Activated B cell treated with CpG ODN at 0.5 μM for 24 hours (primary cell): ENCODE measurements at regions of chr13 and their contacts with region 1.

Region 1: GRCh38 chr13:21287331-21287907 is 111.0 kb downstream of the MRPL57 start:
- DNase-seq: no peak
- ATAC-seq: no peak
- H3K4me3 Mint-ChIP-seq: no peak overlapping the region
- H3K27ac Mint-ChIP-seq: no peak overlapping the region
- H3K4me1 Mint-ChIP-seq: no peaks in the 10 kb centered on the region
- H3K27me3 Mint-ChIP-seq: peaks cover 10% of the 10 kb centered on the region
- CTCF ChIP-seq: no peak

Region 2: DNA sequence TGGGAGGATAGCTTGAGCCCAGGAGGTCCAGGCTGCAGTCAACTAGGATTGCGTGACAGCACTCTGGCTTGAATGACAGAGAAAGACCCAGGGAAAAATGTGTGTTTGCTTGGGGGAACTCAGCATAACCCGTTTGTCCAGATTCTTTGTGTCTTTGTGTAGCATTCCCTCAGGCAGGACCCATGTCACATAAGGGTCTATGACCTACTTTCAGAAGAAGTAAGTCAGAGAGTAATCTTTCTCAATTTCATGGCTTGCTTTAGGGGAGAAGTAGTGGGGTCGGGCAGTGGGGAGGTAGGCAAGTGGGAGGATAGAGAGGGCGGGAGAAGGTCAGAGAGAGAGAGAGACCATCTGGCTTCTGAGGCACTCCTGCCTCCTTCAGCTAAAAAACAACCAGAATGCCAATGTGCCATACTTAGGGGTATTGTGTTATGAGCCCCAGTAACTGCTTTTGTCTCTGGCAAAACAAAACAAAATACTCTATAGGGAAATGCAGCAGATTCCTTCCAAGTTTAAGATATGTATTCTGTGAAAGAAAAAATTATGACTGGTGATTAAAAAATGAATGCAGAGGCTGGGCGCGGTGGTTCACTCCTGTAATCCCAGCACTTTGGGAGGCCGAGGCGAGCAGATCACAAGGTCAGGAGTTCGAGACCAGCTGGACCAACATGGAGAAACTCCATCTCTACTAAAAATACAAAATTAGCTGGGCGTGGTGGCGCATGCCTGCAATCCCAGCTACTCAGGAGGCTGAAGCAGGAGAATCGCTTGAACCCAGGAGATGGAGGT is 1492.6 kb before region 1 on chr13:
- CTCF ChIA-PET with region 1: no interaction called
- POLR2A ChIA-PET with region 1: no interaction called
- intact Hi-C with region 1: no loop called
- DNase-seq: no peak
- ATAC-seq: no peak
- H3K4me3 Mint-ChIP-seq: no peak overlapping the region
- H3K27ac Mint-ChIP-seq: no peak overlapping the region
- H3K4me1 Mint-ChIP-seq: peaks cover 4% of the 10 kb centered on the region
- H3K27me3 Mint-ChIP-seq: no peaks in the 10 kb centered on the region
- CTCF ChIP-seq: no peak

Region 3: DNA sequence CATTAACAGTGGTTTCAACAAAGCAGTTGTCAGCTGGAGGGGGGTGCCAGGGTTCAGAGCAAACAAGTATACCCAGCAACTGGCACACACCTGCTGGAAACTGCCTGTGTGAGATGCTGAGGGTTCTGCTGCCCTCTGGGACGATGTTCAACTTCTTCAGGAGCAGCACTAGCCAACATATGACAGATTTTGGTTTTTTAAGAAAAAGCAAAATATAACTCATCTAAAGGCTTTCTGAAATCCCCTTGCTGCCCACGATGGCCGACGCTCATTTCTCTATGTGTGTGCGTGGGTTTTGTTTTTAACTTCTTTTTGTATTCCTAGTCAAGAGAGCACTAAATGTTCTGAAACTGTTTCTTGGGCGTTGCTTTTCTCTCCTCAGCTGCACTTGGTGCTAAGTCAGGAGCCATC is 31.1 kb before region 1 on chr13:
- CTCF ChIA-PET with region 1: no interaction called
- POLR2A ChIA-PET with region 1: no interaction called
- intact Hi-C with region 1: loop called (anchors 5 kb)
- DNase-seq: no peak
- ATAC-seq: no peak
- H3K4me3 Mint-ChIP-seq: no peak overlapping the region
- H3K27ac Mint-ChIP-seq: no peak overlapping the region
- H3K4me1 Mint-ChIP-seq: no peaks in the 10 kb centered on the region
- H3K27me3 Mint-ChIP-seq: peaks cover 6% of the 10 kb centered on the region
- CTCF ChIP-seq: no peak

Region 4: DNA sequence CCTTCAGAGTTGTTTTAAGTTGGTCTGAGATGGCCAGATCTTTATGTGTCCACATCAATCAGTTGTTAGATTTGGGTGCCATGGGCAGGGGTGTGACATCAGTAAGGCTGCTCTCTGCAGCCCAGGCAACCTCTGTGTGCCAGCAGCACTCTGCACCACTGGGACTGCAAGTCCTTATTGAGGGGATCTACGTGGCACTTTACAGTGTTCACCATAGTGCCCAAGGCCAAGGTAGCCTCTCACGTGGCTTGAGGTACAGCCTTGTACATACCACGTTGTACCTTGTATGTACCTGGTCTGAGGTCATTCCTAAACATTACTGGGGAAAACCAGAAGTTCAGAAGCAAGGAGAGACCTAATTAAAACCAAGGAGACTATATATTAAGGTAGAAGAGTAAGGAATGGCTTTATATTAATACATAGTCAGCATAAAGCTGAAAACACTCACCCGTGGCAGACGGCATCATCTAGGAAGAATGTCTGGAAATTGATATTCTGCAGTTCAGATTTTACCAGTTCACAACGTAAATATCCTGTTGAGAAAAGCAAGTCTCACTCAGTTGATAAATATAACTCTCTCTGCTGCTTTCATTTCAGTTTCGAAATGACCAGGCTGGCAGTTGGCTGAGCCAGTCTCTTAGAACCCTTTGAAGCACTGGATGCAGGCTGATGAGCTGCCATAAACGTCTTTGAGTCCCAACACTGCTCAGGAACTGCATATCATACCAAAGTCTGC is 42.9 kb after region 1 on chr13:
- CTCF ChIA-PET with region 1: no interaction called
- POLR2A ChIA-PET with region 1: no interaction called
- intact Hi-C with region 1: no loop called
- DNase-seq: no peak
- ATAC-seq: peak; percentile 56
- H3K4me3 Mint-ChIP-seq: peak overlapping the region; percentile 21
- H3K27ac Mint-ChIP-seq: no peak overlapping the region
- H3K4me1 Mint-ChIP-seq: peaks cover 24% of the 10 kb centered on the region
- H3K27me3 Mint-ChIP-seq: no peaks in the 10 kb centered on the region
- CTCF ChIP-seq: no peak